GM12878 (cell line): ENCODE measurements at regions of chr9 and their contacts with region 1.

Region 1: DNA sequence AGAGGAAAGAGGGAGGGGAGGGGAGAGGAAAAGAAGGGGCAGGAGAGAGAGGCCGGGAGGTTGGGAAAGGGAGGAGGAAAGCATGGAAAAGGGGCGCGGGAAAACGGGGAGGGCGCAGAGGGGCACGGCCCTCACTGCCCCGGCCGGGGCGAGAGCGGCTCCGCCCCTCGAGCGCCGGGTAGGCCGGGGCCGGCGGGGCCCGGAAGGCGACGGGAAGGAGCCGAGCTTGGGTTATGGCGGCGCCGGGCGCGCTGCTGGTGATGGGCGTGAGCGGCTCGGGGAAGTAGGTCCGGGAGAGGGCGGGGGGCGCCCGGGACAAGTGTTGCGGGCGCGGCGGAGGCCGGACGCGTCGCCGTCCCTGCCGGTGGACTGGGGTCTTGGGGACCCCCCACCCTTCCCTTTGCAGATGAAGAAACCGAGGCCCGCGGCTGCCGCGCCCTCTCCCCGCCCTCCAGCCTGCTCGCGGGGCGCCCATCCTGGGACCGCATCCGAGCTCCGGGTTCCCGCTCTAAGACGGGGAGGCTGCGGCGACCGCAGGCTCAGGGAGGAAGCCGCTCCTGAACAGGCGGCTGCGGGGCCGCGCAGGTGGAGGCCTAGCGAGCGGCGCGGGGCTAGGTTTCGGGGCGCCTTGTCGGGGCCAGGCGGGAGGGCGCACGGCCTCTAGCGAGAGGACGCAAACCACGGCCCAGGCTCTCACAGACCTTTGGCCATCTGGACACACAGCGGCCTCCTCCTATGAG is at the start of gene IDNK:
- DNase-seq: no peak
- ATAC-seq: peak; percentile 94
- H3K4me3 ChIP-seq: peak within 1 kb of the TSS; percentile 97
- H3K27ac ChIP-seq: peak within 1 kb of the TSS; percentile 91
- H3K4me1 ChIP-seq: peaks cover 6% of the 10 kb centered on the region; the same call in 1 of the 2 replicates
- H3K27me3 ChIP-seq: no peaks in the 10 kb centered on the region
- CTCF ChIP-seq: no peak
- EP300 ChIP-seq: no peak
- POLR2A ChIP-seq: peak; percentile 93
- RAD21 ChIP-seq: no peak
- polyA plus RNA-seq, gene IDNK: 8.7 to 8.9 TPM

Region 2: GRCh38 chr9:83384214-83384613 is 238.9 kb before region 1 on chr9:
- CTCF ChIA-PET with region 1: no interaction called
- POLR2A ChIA-PET with region 1: no interaction called
- RAD21 ChIA-PET with region 1: no interaction called
- SMC1A ChIA-PET with region 1: no interaction called
- in situ Hi-C with region 1: no loop called
- intact Hi-C with region 1: no loop called
- DNase-seq: no peak
- ATAC-seq: no peak
- H3K4me3 ChIP-seq: no peak overlapping the region
- H3K27ac ChIP-seq: no peak overlapping the region
- H3K4me1 ChIP-seq: no peaks in the 10 kb centered on the region
- H3K27me3 ChIP-seq: no peaks in the 10 kb centered on the region
- CTCF ChIP-seq: no peak
- EP300 ChIP-seq: no peak
- POLR2A ChIP-seq: no peak
- RAD21 ChIP-seq: no peak

Region 3: GRCh38 chr9:83642802-83643201 is 19.7 kb after region 1 on chr9:
- CTCF ChIA-PET with region 1: interaction called, 50 read pairs
- POLR2A ChIA-PET with region 1: interaction called, 3 read pairs
- RAD21 ChIA-PET with region 1: interaction called, 31 read pairs
- SMC1A ChIA-PET with region 1: interaction called, 32 read pairs
- in situ Hi-C with region 1: no loop called
- intact Hi-C with region 1: loop called (anchors 2 kb)
- DNase-seq: no peak
- ATAC-seq: no peak
- H3K4me3 ChIP-seq: no peak overlapping the region
- H3K27ac ChIP-seq: no peak overlapping the region
- H3K4me1 ChIP-seq: no peaks in the 10 kb centered on the region
- H3K27me3 ChIP-seq: no peaks in the 10 kb centered on the region
- CTCF ChIP-seq: no peak
- EP300 ChIP-seq: no peak
- POLR2A ChIP-seq: no peak; the same call in 1 of the 2 replicates
- RAD21 ChIP-seq: no peak

Region 4: GRCh38 chr9:83656032-83656680 is 33.0 kb after region 1 on chr9:
- CTCF ChIA-PET with region 1: interaction called, 50 read pairs
- POLR2A ChIA-PET with region 1: interaction called, 3 read pairs
- RAD21 ChIA-PET with region 1: interaction called, 7 read pairs
- SMC1A ChIA-PET with region 1: interaction called, 12 read pairs
- in situ Hi-C with region 1: no loop called
- intact Hi-C with region 1: loop called (anchors 1 kb)
- DNase-seq: peak; percentile 37
- ATAC-seq: peak; percentile 87
- H3K4me3 ChIP-seq: no peak overlapping the region
- H3K27ac ChIP-seq: peak overlapping the region; percentile 73
- H3K4me1 ChIP-seq: peaks cover 30% of the 10 kb centered on the region
- H3K27me3 ChIP-seq: no peaks in the 10 kb centered on the region
- CTCF ChIP-seq: no peak
- EP300 ChIP-seq: no peak
- POLR2A ChIP-seq: no peak
- RAD21 ChIP-seq: no peak

Region 5: DNA sequence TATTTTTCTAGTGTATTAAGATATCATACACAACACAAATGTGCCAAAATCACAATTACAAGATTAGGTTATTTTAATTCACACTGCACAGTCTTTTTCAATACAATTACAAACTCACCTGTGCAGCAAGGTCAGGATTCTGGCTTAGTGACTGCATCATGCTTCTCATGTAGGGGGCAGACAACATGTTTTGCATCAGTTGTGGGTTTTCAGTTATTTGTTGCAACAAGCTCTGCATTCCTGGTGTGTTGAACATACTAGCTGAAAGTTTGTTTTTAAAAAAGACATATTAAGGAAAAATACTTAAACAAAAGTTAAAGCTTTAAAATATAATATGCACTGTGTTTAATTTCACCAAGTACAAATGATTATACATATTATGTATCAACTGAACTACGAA is 46.0 kb after region 1 on chr9:
- CTCF ChIA-PET with region 1: interaction called, 6 read pairs
- POLR2A ChIA-PET with region 1: no interaction called
- RAD21 ChIA-PET with region 1: no interaction called
- SMC1A ChIA-PET with region 1: interaction called, 3 read pairs
- in situ Hi-C with region 1: no loop called
- intact Hi-C with region 1: loop called (anchors 1 kb)
- DNase-seq: no peak
- ATAC-seq: no peak
- H3K4me3 ChIP-seq: no peak overlapping the region
- H3K27ac ChIP-seq: no peak overlapping the region
- H3K4me1 ChIP-seq: peaks cover 14% of the 10 kb centered on the region; the same call in 1 of the 2 replicates
- H3K27me3 ChIP-seq: no peaks in the 10 kb centered on the region
- CTCF ChIP-seq: no peak
- EP300 ChIP-seq: no peak
- POLR2A ChIP-seq: no peak
- RAD21 ChIP-seq: no peak

Region 6: GRCh38 chr9:83920927-83921707 is 298.0 kb after region 1 on chr9 and contains the start of gene KIF27:
- CTCF ChIA-PET with region 1: interaction called, 9 read pairs
- POLR2A ChIA-PET with region 1: no interaction called
- RAD21 ChIA-PET with region 1: interaction called, 5 read pairs
- SMC1A ChIA-PET with region 1: interaction called, 3 read pairs
- in situ Hi-C with region 1: loop called (anchors 5 kb)
- intact Hi-C with region 1: loop called (anchors 2 kb)
- DNase-seq: peak; percentile 80
- ATAC-seq: peak; percentile 95
- H3K4me3 ChIP-seq: peak within 1 kb of the TSS; percentile 79
- H3K27ac ChIP-seq: peak within 1 kb of the TSS; percentile 79
- H3K4me1 ChIP-seq: peaks cover 9% of the 10 kb centered on the region
- H3K27me3 ChIP-seq: no peaks in the 10 kb centered on the region
- CTCF ChIP-seq: peak in 2 of 3 experiments; percentile 11 to 19; a peak in 3 of 6 replicates
- EP300 ChIP-seq: no peak
- POLR2A ChIP-seq: peak; percentile 81
- RAD21 ChIP-seq: no peak
- polyA plus RNA-seq, gene KIF27: 0.64 to 0.92 TPM